ENCODE measurements at regions of chr22 and their contacts with region 1.

Region 1: GRCh38 chr22:26589845-26590736 is at the start of gene TPST2:
- DNase-seq: peak; percentile 78 to 85
- ATAC-seq: peak; percentile 93 to 97 (median 95)
- H3K4me3 ChIP-seq: peak within 1 kb of the TSS; percentile 69 to 98 (median 96)
- H3K27ac ChIP-seq: peak within 1 kb of the TSS; percentile 62 to 95 (median 88)
- H3K4me1 ChIP-seq: peaks cover 4 to 78% (median 42%) of the 10 kb centered on the region in 9 donors
- H3K27me3 ChIP-seq: no peaks in the 10 kb centered on the region
- CTCF ChIP-seq: peak in 2 of 9 donors; percentile 29 to 38
- total RNA-seq, gene TPST2: 11.1 to 35.1 (median 19.0) TPM

Region 2: GRCh38 chr22:26483439-26484359 is 106.4 kb before region 1 on chr22 and contains the starts of genes HPS4 and SRRD:
- intact Hi-C with region 1: loop called in 2 of 10 experiments (anchors 2 to 5 kb)
- DNase-seq: peak; percentile 85 to 91
- ATAC-seq: peak; percentile 94 to 97 (median 96)
- H3K4me3 ChIP-seq: peak within 1 kb of the TSS; percentile 70 to 100 (median 97)
- H3K27ac ChIP-seq: peak within 1 kb of the TSS; percentile 6 to 97 (median 95)
- H3K4me1 ChIP-seq: peaks cover 0 to 66% (median 59%) of the 10 kb centered on the region in 9 donors
- H3K27me3 ChIP-seq: no peaks in the 10 kb centered on the region
- CTCF ChIP-seq: no peak
- total RNA-seq, gene HPS4: 6.6 to 12.0 (median 9.0) TPM
- total RNA-seq, gene SRRD: 19.5 to 26.3 (median 21.2) TPM

Region 3: GRCh38 chr22:26511857-26512793 is 78.0 kb before region 1 on chr22 and contains the start of gene TFIP11:
- intact Hi-C with region 1: loop called in 6 of 10 experiments (anchors 5 to 10 kb)
- DNase-seq: peak; percentile 95 to 96
- ATAC-seq: peak; percentile 96 to 100 (median 99)
- H3K4me3 ChIP-seq: peak within 1 kb of the TSS; percentile 65 to 100 (median 82)
- H3K27ac ChIP-seq: peak within 1 kb of the TSS in 9 of 10 donors; percentile 56 to 93 (median 82)
- H3K4me1 ChIP-seq: peaks cover 0 to 31% (median 22%) of the 10 kb centered on the region in 9 donors
- H3K27me3 ChIP-seq: no peaks in the 10 kb centered on the region
- CTCF ChIP-seq: no peak
- total RNA-seq, gene TFIP11: 18.8 to 25.5 (median 22.8) TPM

Region 4: DNA sequence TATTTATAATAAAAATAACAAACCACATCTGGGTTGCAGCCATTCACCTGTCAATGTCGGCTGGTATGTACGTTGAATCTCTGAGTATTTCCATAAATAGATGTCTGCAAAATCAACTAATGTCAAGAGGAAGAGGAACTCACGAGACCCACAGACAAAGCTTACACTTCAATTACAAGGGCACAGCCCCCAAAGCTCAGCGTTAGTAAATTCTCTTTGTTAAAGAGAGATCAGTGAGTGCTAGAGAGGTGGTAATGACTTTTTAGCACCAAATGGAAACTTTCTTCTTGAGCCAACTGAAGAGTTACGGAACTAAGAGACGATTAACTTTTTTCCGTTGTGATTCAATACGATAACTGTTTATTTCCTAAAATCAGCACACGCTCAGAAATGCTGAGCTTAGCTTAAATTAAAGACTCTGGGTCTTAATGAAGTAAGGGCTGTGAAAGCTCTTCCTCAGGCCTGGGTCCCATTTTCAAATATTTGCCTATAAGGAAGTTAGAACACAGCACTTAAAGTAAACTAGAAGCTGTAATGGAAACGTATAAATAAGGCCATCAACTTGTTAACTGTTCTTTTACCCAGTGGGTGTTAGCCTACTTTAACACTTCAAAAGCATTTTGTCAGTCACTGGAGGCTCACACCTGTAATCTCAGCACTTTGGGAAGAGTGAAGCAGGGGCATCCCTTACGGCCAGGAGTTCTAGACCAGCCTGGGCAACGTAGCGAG is 55.1 kb before region 1 on chr22:
- intact Hi-C with region 1: loop called in 1 of 10 experiments (anchors 10 kb)
- DNase-seq: no peak
- ATAC-seq: peak in 1 of 8 donors; percentile 29
- H3K4me3 ChIP-seq: no peak overlapping the region
- H3K27ac ChIP-seq: peak overlapping the region in 6 of 10 donors; percentile 2 to 76 (median 18)
- H3K4me1 ChIP-seq: peaks cover 0 to 24% (median 13%) of the 10 kb centered on the region in 9 donors
- H3K27me3 ChIP-seq: no peaks in the 10 kb centered on the region
- CTCF ChIP-seq: no peak

Region 5: GRCh38 chr22:26629988-26630761 is 40.1 kb after region 1 on chr22:
- intact Hi-C with region 1: loop called in 1 of 10 experiments (anchors 5 kb)
- DNase-seq: no peak
- ATAC-seq: peak in 1 of 8 donors; percentile 18
- H3K4me3 ChIP-seq: no peak overlapping the region
- H3K27ac ChIP-seq: no peak overlapping the region
- H3K4me1 ChIP-seq: peaks cover 0 to 17% (median 5%) of the 10 kb centered on the region in 9 donors
- H3K27me3 ChIP-seq: no peaks in the 10 kb centered on the region
- CTCF ChIP-seq: no peak